AG04449 (cell line): ENCODE measurements at regions of chr1 and their contacts with region 1.

Region 1: DNA sequence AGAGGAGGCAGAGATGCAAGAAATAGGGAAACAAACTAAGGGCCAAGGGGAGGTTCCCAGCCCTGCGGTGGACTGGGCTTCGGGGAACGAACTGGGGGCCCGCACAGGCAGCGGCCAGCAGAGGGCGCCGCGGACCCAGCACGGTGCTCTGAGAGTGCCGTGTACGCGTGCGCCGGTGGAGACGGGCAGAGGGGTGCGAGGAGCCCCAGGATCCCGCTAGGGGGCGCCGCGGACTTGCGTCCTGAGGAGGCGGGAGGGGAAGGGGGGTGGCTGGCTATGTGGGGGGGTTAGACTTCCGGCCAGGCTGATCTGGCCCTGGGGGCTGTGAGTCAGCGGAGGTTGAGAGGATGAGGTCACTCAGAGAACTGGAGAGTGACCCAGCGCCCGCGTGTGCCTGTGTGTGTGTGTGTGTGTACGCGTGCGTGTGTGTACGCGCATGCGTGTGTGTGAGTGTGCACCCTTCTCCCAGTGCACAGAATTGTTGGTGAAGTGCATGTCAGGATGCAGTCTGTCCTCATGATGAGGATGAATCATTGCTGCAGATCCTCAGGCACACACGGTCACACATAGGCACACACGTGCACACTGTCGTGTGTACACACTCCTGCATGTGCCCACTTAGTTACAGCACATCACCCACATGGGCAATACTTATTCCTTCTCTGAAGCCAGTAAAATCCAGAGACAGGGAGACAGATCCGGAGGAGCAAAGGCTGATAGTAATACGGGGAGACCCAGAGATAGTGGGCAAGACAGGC is 17.0 kb downstream of the NES start:
- DNase-seq: peak; percentile 77
- H3K4me3 ChIP-seq: no peak overlapping the region
- CTCF ChIP-seq: peak; percentile 100

Region 2: DNA sequence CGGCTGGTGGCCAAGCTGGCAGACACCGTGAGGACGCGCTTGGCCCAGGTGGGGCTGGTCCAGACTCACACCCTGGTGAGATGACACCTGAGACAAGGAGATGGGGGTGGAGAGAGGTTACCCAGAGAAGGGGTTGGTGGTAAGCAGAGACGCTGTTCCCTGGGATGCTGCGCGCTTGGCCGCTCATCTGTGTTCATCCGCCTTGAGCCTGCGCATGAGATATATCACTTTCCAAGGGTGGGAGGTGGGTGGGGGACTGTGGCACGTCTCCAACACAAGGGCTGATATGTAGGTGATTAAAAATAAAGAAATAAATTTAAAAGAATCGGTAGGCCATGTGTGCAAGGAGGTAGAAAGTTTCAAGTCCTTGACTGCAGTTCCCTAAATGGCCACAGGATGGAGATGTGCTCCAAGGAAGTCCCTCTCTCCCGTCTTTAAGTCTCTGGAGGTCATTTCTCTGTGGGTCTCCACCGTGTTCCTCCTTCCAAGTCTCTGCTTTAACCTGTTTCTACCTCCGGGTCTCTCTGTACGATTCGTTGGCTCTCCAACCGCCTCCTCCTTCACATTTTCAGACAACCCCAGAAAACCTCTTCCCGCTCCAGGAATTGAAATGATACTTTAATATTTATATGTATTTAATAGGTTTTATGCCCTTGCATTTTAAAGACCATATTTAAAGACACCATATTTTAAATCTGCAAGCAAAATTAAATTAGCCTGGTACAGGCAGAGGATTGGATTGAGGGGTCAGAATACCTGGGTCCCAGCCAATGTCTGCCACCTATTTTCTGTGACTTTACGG is 76.2 kb before region 1 on chr1:
- CTCF ChIA-PET with region 1: interaction called, 10 read pairs
- POLR2A ChIA-PET with region 1: no interaction called
- DNase-seq: peak; percentile 40
- H3K4me3 ChIP-seq: no peak overlapping the region
- CTCF ChIP-seq: peak; percentile 81

Region 3: DNA sequence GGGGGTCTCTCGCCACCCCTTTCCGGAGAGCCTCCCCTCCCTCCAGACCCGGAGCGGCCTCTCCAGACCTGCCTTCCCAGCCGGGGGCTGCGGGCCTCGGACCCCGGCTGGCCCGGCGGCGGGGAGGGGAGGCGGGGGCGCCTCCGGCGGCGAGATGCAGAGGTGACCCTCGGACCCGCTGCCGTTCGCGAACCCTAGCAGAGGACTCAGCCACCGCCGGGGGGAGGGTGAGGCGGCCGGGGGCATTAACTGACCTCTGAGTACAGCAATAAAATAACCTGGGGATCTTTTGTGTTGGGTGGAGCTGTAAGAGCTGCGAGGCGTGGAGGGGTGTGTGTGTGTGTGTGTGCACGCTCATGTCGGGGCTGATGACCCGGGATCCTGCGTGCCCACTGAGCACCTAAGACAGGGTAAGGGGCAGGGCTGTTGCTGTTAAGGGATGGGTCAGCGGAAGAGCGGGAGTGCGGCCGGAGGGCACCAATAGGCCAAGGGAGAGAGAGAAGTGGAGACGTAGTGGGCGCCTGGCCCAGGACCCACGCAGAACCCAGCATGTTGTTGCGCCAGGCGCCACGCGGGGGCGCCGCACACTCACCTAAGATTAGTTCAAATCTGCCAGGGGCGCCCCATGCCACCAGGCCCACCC is 34.6 kb before region 1 on chr1:
- CTCF ChIA-PET with region 1: interaction called, 409 read pairs
- POLR2A ChIA-PET with region 1: no interaction called
- DNase-seq: no peak
- H3K4me3 ChIP-seq: no peak overlapping the region
- CTCF ChIP-seq: peak; percentile 74

Region 4: DNA sequence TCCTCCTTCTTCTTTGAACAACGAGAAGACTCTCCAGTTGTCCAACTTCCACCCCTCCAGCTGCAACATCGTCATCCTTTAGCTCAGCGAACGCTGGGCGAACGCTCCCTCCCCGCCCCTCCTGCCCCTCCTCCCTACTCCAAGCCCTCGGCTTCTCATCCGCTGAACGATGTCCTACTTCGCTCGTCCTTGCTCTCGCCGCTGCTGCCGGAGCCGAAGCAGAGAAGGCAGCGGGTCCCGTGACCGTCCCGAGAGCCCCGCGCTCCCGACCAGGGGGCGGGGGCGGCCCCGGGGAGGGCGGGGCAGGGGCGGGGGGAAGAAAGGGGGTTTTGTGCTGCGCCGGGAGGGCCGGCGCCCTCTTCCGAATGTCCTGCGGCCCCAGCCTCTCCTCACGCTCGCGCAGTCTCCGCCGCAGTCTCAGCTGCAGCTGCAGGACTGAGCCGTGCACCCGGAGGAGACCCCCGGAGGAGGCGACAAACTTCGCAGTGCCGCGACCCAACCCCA is 18.4 kb before region 1 on chr1 and contains the start of gene BCAN:
- CTCF ChIA-PET with region 1: interaction called, 185 read pairs
- POLR2A ChIA-PET with region 1: no interaction called
- DNase-seq: no peak
- H3K4me3 ChIP-seq: peak within 1 kb of the TSS; percentile 20; the same call in 1 of the 2 replicates
- CTCF ChIP-seq: no peak

Region 5: DNA sequence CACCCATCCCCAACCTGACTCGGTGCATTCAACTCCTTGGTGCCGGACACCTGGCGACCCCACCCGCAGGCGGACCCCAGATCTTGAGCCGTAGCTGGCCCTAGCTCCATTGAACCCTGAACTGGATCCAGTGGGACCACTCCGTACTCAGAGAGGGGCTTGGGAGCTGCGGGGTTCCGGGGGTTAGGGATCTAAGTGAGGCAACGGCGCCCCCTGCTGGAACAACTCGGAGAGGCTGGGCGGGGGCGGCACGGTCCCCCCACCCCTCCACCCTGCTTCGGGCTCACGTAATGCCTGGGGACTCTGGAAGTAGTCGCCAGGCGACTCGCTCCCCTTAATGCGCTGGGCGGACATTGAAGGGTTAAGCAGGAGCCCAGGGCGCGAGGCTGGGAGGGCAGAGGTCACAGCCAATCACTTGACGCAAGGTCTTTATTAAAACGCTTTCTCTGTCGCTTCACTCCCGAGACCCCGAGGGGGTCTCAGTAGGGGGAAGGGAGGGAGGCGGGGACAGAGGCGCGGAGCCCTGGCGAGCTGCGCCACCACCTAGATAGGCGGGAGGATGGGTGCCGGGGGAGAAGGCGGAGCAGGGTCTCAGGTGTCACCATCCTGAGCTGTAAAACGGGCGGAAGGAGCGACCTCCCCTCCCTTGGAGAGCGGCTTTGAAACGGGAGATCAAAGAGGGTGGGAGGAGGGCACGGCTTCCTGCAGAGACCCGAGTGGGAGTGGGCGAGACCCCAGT is 45.9 kb after region 1 on chr1:
- CTCF ChIA-PET with region 1: interaction called, 27 read pairs
- POLR2A ChIA-PET with region 1: interaction called, 3 read pairs
- DNase-seq: no peak
- H3K4me3 ChIP-seq: peak overlapping the region; percentile 55
- CTCF ChIP-seq: peak; percentile 88

Region 6: DNA sequence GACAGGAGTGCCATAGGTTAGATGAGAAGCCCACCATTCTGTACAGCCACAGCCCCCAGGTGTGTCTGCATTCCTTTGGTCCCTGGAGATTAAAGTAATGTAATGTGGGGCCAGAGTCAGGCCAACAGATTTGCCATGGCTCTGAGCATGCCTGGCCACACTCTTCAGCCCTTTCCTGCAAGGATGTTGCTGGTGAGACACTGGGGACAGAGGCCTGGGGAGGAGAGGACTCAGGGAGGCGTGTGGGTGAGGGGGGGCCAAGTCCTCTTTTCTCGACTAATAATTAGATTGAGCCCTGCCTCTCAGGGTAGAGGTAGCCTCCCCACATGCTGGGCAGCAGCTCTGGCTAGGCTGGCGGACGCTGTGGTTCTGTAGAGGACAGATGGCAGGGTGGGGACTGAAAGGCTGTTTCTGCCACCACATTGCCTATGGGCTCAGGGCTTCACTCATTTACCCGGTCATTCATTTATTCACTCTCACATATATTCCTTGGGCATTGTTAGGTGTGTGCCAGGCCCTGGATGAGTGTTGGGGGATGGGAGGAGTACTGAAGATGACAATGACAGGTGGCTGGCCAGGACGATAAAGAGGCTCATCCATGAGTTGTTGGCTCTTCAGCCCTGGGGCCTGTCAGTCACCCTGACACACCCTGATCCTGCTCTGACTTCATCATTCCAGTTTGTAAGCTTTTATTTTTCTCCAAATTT is 100.1 kb after region 1 on chr1:
- CTCF ChIA-PET with region 1: no interaction called
- POLR2A ChIA-PET with region 1: no interaction called
- DNase-seq: no peak
- H3K4me3 ChIP-seq: no peak overlapping the region
- CTCF ChIP-seq: no peak

Region 7: DNA sequence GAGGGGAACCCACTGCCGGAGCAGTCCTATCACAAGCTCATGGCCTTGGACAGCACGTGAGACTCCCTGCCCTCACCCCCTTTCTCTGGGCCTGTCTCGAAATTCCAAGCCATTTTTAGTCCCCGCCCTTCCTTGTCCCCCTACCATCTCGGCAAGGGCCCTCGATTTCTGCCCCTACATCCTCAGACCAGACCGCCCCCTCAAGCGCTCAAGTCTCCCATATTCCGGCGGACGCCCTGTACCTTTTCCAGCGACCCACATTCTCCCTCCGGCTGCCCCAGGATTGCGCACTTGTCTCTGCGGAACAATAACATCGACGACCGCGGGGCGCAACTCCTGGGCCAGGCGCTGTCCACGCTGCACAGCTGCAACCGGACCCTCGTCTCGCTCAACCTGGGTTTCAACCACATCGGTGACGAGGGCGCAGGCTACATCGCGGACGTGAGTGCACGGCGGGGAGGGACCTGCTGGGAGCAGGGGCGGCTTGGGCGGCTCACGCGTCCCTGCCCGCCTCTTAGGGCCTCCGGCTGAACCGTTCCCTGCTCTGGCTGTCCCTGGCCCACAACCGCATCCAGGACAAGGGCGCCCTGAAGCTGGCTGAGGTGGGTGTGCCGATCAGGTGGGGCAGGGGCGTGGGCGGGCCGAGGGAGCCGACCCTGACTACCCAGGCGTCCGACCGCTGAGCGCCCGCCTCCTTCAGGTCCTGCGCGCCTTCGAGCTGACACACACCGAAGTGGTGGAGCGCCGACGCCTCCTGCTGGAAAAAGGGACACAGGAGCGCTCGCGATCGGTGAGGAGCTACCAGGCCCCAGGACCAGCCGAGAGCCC is 267.3 kb after region 1 on chr1:
- CTCF ChIA-PET with region 1: interaction called, 10 read pairs
- POLR2A ChIA-PET with region 1: interaction called, 4 read pairs
- DNase-seq: no peak
- H3K4me3 ChIP-seq: peak overlapping the region; percentile 55
- CTCF ChIP-seq: peak; percentile 94